CD4-positive, alpha-beta T cell (primary cell): ENCODE measurements at regions of chr16 and their contacts with region 1.

Region 1: GRCh38 chr16:58755989-58756649 is 22.0 kb upstream of the GOT2 start:
- DNase-seq: peak; percentile 61 to 90 (median 74)
- ATAC-seq: peak; percentile 88
- H3K4me3 ChIP-seq: peak overlapping the region; percentile 26
- H3K4me3 Mint-ChIP-seq: peak overlapping the region; percentile 62
- H3K27ac ChIP-seq: peak overlapping the region in 1 of 2 donors; percentile 14
- H3K27ac Mint-ChIP-seq: peak overlapping the region; percentile 86
- H3K4me1 ChIP-seq: peaks cover 7% of the 10 kb centered on the region
- H3K4me1 Mint-ChIP-seq: peaks cover 10% of the 10 kb centered on the region
- H3K27me3 ChIP-seq: no peaks in the 10 kb centered on the region
- H3K27me3 Mint-ChIP-seq: no peaks in the 10 kb centered on the region
- CTCF ChIP-seq: peak; percentile 85

Region 2: DNA sequence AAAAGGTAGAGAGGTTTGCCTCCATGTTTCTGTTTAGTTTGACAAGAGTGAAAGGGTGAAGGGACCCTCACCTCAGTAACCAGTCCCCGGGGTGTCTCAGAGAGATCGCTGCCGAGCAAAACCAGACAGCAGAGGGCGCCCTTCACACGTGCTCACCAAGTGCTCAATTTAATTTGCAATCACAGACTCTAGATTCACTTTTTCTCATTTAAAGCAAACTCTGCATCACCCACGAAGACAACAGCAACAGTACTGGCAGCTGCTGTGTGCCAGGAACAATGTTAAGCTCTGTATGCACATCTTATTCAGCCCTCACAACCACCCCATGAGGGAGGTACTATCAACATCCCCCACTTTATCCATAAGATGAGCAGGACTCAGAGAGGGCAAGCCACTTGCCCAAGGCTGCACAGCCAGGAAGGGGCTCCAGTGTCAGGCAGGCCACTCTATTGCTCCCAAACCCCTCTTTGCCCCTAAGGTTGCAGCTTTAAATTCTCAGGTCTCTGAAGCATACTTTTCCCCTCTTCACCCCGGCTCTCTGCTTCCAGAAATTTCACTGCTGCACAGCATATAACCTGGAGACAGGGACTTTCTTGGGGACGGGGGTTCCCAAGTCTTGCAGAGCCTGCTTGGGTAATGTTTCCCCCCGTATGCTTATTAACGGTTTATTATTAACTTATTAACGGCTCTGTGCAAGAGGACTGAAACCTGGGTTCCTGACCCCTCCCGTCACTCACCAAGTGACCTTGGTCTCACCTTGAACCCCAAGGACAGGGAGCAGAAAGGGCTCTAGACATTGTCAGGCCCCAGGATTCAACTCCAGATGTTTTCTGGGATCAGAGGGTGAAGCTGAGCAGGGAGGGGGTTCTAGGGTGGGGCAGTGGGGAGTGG is 856.1 kb before region 1 on chr16:
- CTCF ChIA-PET with region 1: no interaction called
- POLR2A ChIA-PET with region 1: no interaction called
- intact Hi-C with region 1: loop called (anchors 2 to 5 kb)
- DNase-seq: peak; percentile 62 to 90 (median 78)
- ATAC-seq: peak; percentile 67
- H3K4me3 ChIP-seq: no peak overlapping the region
- H3K4me3 Mint-ChIP-seq: no peak overlapping the region
- H3K27ac ChIP-seq: no peak overlapping the region
- H3K27ac Mint-ChIP-seq: no peak overlapping the region
- H3K4me1 ChIP-seq: peaks cover 4% of the 10 kb centered on the region
- H3K4me1 Mint-ChIP-seq: peaks cover 6% of the 10 kb centered on the region
- H3K27me3 ChIP-seq: peaks cover 0 to 6% of the 10 kb centered on the region in 2 experiments
- H3K27me3 Mint-ChIP-seq: peaks cover 24% of the 10 kb centered on the region
- CTCF ChIP-seq: peak; percentile 83

Region 3: GRCh38 chr16:58129097-58129936 is 626.8 kb before region 1 on chr16 and contains the start of gene CFAP20:
- CTCF ChIA-PET with region 1: no interaction called
- POLR2A ChIA-PET with region 1: no interaction called
- intact Hi-C with region 1: loop called in 1 of 2 experiments (anchors 10 kb)
- DNase-seq: peak; percentile 92 to 98 (median 96)
- ATAC-seq: peak; percentile 84
- H3K4me3 ChIP-seq: peak within 1 kb of the TSS; percentile 99
- H3K4me3 Mint-ChIP-seq: peak within 1 kb of the TSS; percentile 91
- H3K27ac ChIP-seq: peak within 1 kb of the TSS; percentile 84 to 88
- H3K27ac Mint-ChIP-seq: peak within 1 kb of the TSS; percentile 88
- H3K4me1 ChIP-seq: peaks cover 40% of the 10 kb centered on the region
- H3K4me1 Mint-ChIP-seq: peaks cover 47% of the 10 kb centered on the region
- H3K27me3 ChIP-seq: no peaks in the 10 kb centered on the region
- H3K27me3 Mint-ChIP-seq: no peaks in the 10 kb centered on the region
- CTCF ChIP-seq: no peak
- total RNA-seq, gene CFAP20: 250 to 261 TPM

Region 4: GRCh38 chr16:58515125-58515870 is 240.8 kb before region 1 on chr16 and contains the start of gene SETD6:
- CTCF ChIA-PET with region 1: interaction called, 28 read pairs
- POLR2A ChIA-PET with region 1: interaction called, 9 read pairs
- intact Hi-C with region 1: loop called (anchors 1 kb)
- DNase-seq: peak in 13 of 14 experiments; percentile 31 to 80 (median 65)
- ATAC-seq: peak; percentile 53
- H3K4me3 ChIP-seq: peak within 1 kb of the TSS; percentile 75
- H3K4me3 Mint-ChIP-seq: peak within 1 kb of the TSS; percentile 90
- H3K27ac ChIP-seq: peak within 1 kb of the TSS; percentile 66 to 72
- H3K27ac Mint-ChIP-seq: peak within 1 kb of the TSS; percentile 90
- H3K4me1 ChIP-seq: peaks cover 21% of the 10 kb centered on the region
- H3K4me1 Mint-ChIP-seq: peaks cover 38% of the 10 kb centered on the region
- H3K27me3 ChIP-seq: no peaks in the 10 kb centered on the region
- H3K27me3 Mint-ChIP-seq: no peaks in the 10 kb centered on the region
- CTCF ChIP-seq: no peak
- total RNA-seq, gene SETD6: 21.9 to 25.5 TPM

Region 5: GRCh38 chr16:58556678-58557077 is 199.4 kb before region 1 on chr16:
- CTCF ChIA-PET with region 1: no interaction called
- POLR2A ChIA-PET with region 1: no interaction called
- intact Hi-C with region 1: no loop called
- DNase-seq: no peak
- ATAC-seq: no peak
- H3K4me3 ChIP-seq: no peak overlapping the region
- H3K4me3 Mint-ChIP-seq: no peak overlapping the region
- H3K27ac ChIP-seq: no peak overlapping the region
- H3K27ac Mint-ChIP-seq: no peak overlapping the region
- H3K4me1 ChIP-seq: no peaks in the 10 kb centered on the region
- H3K4me1 Mint-ChIP-seq: peaks cover 3% of the 10 kb centered on the region
- H3K27me3 ChIP-seq: no peaks in the 10 kb centered on the region
- H3K27me3 Mint-ChIP-seq: no peaks in the 10 kb centered on the region
- CTCF ChIP-seq: no peak

Region 6: DNA sequence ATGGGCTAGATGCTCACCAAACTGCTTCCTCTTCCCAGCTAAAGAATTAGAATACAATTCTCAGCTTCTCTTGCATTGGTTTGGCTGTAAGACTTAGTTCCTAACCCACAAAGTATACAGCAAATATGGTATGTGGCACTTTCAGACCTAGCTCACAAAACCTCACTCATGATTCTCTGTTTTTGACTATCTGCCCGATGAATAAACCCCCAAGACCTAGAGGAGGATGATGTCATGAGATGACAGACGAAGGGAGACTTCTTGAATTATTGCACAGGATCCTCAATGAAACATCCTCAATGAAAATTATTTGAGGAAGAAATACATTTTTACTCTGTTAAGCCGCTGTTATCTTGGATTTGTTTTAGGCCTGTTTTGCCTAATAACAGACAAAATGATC is 140.8 kb before region 1 on chr16:
- CTCF ChIA-PET with region 1: no interaction called
- POLR2A ChIA-PET with region 1: no interaction called
- intact Hi-C with region 1: no loop called
- DNase-seq: no peak
- ATAC-seq: no peak
- H3K4me3 ChIP-seq: no peak overlapping the region
- H3K4me3 Mint-ChIP-seq: no peak overlapping the region
- H3K27ac ChIP-seq: no peak overlapping the region
- H3K27ac Mint-ChIP-seq: no peak overlapping the region
- H3K4me1 ChIP-seq: peaks cover 41% of the 10 kb centered on the region
- H3K4me1 Mint-ChIP-seq: peaks cover 30% of the 10 kb centered on the region
- H3K27me3 ChIP-seq: no peaks in the 10 kb centered on the region
- H3K27me3 Mint-ChIP-seq: no peaks in the 10 kb centered on the region
- CTCF ChIP-seq: no peak

Region 7: DNA sequence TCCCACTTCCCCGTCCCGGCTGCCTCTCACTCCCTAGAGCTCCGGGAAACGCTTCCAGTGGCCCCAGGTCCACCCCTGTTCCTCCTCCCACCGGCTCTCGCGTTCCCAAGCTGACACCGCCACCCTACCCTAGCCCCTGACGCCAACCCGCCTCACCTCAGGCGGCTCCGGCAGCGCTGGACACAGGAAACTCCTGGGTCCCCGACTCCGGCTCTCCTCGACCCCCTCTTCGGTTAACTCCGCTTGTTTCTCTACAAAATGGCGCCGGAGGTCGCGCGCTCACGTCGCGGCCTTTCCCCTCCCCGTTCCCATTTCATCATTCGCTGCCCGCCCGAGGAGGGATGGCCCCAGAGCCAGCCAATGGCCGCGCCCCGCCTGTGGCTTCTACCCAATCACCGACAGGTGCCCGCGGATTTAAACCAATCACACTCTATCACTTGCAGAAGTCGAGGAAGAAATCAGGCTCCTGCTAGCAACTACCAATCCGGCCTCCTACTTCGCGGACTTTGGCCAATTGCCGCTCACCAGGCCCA is 126.5 kb before region 1 on chr16 and contains the start of gene CNOT1:
- CTCF ChIA-PET with region 1: interaction called, 7 read pairs
- POLR2A ChIA-PET with region 1: no interaction called
- intact Hi-C with region 1: loop called in 1 of 2 experiments (anchors 1 kb)
- DNase-seq: peak; percentile 94 to 99 (median 97)
- ATAC-seq: peak; percentile 81
- H3K4me3 ChIP-seq: peak within 1 kb of the TSS; percentile 93
- H3K4me3 Mint-ChIP-seq: peak within 1 kb of the TSS; percentile 98
- H3K27ac ChIP-seq: peak within 1 kb of the TSS; percentile 99 to 100
- H3K27ac Mint-ChIP-seq: peak within 1 kb of the TSS; percentile 96
- H3K4me1 ChIP-seq: peaks cover 37% of the 10 kb centered on the region
- H3K4me1 Mint-ChIP-seq: peaks cover 28% of the 10 kb centered on the region
- H3K27me3 ChIP-seq: no peaks in the 10 kb centered on the region
- H3K27me3 Mint-ChIP-seq: no peaks in the 10 kb centered on the region
- CTCF ChIP-seq: no peak
- total RNA-seq, gene CNOT1: 164 to 184 TPM

Region 8: GRCh38 chr16:58709333-58709732 is 46.8 kb before region 1 on chr16:
- CTCF ChIA-PET with region 1: no interaction called
- POLR2A ChIA-PET with region 1: no interaction called
- intact Hi-C with region 1: no loop called
- DNase-seq: no peak
- ATAC-seq: no peak
- H3K4me3 ChIP-seq: no peak overlapping the region
- H3K4me3 Mint-ChIP-seq: no peak overlapping the region
- H3K27ac ChIP-seq: no peak overlapping the region
- H3K27ac Mint-ChIP-seq: no peak overlapping the region
- H3K4me1 ChIP-seq: no peaks in the 10 kb centered on the region
- H3K4me1 Mint-ChIP-seq: no peaks in the 10 kb centered on the region
- H3K27me3 ChIP-seq: no peaks in the 10 kb centered on the region
- H3K27me3 Mint-ChIP-seq: no peaks in the 10 kb centered on the region
- CTCF ChIP-seq: no peak